WTC11 (cell line): ENCODE measurements at regions of chr1 and their contacts with region 1.

Region 1: DNA sequence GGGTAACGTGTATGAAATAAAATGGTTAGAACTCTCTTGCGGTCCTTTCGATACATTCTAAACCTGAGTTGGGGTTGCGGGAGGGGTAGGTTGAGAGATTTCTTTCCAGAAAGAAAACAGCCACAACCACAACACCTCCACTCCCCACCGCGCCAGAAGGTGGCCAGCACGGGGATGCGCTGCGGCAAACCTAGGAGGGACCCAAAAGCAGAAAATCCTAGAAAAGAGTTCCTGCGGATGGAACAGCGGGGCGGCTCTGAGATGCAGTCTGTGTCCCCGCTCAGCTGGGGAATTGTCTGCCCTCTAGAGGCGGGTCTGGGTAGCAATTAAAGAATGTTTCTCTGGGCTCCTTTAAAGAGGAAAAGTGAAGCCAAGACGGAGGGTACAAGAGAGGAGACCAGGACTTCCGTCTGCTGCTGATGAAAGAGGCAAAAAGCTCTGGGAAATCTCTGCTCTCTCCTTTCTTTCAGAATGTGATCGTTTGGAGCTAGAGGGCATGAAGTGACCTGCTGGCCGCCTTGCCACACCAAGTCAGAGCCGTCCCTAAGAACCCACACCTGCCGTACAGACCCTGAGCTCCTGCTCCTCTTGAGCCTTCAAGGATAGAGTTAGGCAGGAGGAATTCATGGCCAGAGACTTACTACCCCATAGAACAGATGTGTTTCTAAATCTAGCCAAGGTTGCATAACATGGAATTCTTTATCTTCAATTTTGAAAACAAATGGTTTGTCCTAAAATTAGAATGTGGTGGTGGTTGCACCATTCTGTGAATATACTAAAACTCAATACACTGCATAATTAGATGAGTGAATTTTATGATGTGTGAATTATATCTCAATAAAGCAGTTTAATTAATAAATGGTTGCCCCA is 46.5 kb upstream of the COA6 start:
- DNase-seq: peak; percentile 79
- ATAC-seq: peak; percentile 81
- H3K4me3 Mint-ChIP-seq: peak overlapping the region; percentile 53
- H3K27ac Mint-ChIP-seq: no peak overlapping the region
- H3K4me1 Mint-ChIP-seq: peaks cover 9% of the 10 kb centered on the region
- H3K27me3 Mint-ChIP-seq: peaks cover 26% of the 10 kb centered on the region
- CTCF ChIP-seq: peak; percentile 65

Region 2: DNA sequence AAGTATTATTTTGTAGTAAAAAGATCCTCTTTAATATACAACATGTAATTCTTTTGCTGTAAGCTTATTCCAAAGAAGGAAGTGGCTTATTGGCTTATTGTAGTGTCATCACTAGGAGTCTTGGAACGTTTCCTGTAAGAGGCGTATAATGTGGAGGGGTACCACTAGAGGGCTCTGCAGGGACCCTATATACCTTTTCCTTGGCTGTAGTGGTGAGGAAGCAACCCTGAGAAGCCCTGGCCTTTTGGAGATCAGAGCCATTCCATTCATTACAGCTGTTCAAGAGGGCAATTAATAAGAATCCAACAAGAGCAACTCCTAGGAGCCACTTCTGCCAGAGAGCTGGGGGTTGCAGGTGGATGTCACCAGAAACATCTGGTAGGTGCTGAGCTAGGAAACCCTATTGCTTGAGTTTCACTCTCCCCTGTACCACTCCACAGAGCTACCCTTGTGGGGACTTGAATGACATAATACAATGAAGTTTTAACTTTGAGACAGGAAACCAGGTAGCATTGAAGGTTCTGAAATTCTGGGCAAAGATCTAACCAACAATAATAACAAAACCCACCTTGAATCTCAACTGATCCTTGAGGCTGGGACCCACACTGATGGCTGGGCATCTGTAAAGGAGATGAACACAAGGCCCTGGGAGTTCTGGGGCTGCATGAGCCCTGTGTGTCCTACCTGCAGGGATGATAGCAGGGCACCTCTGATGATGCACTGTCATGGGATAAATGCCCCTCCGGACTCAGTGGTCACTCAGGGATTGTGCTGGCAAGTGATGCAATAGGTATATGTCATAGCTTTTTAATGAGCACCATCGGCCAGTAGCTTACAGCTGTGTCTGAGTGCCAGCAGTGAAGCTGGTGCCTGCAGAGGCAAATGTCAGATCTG is 113.7 kb before region 1 on chr1:
- CTCF ChIA-PET with region 1: interaction called, 19 read pairs
- POLR2A ChIA-PET with region 1: no interaction called
- DNase-seq: peak; percentile 43
- ATAC-seq: peak; percentile 58
- H3K4me3 Mint-ChIP-seq: peak overlapping the region; percentile 85
- H3K27ac Mint-ChIP-seq: no peak overlapping the region
- H3K4me1 Mint-ChIP-seq: peaks cover 11% of the 10 kb centered on the region
- H3K27me3 Mint-ChIP-seq: peaks cover 15% of the 10 kb centered on the region
- CTCF ChIP-seq: peak; percentile 35; the same call in 1 of the 2 replicates

Region 3: GRCh38 chr1:234302354-234302962 is 24.3 kb before region 1 on chr1:
- CTCF ChIA-PET with region 1: interaction called, 11 read pairs
- POLR2A ChIA-PET with region 1: no interaction called
- DNase-seq: no peak
- ATAC-seq: no peak
- H3K4me3 Mint-ChIP-seq: no peak overlapping the region
- H3K27ac Mint-ChIP-seq: no peak overlapping the region
- H3K4me1 Mint-ChIP-seq: no peaks in the 10 kb centered on the region
- H3K27me3 Mint-ChIP-seq: no peaks in the 10 kb centered on the region
- CTCF ChIP-seq: no peak

Region 4: GRCh38 chr1:234342774-234343173 is 16.0 kb after region 1 on chr1:
- CTCF ChIA-PET with region 1: interaction called, 10 read pairs
- POLR2A ChIA-PET with region 1: no interaction called
- DNase-seq: no peak
- ATAC-seq: no peak
- H3K4me3 Mint-ChIP-seq: no peak overlapping the region
- H3K27ac Mint-ChIP-seq: no peak overlapping the region
- H3K4me1 Mint-ChIP-seq: no peaks in the 10 kb centered on the region
- H3K27me3 Mint-ChIP-seq: no peaks in the 10 kb centered on the region; the same call in 1 of the 2 replicates
- CTCF ChIP-seq: no peak